ENCODE measurements at regions of chr15 and their contacts with region 1.

Region 1: DNA sequence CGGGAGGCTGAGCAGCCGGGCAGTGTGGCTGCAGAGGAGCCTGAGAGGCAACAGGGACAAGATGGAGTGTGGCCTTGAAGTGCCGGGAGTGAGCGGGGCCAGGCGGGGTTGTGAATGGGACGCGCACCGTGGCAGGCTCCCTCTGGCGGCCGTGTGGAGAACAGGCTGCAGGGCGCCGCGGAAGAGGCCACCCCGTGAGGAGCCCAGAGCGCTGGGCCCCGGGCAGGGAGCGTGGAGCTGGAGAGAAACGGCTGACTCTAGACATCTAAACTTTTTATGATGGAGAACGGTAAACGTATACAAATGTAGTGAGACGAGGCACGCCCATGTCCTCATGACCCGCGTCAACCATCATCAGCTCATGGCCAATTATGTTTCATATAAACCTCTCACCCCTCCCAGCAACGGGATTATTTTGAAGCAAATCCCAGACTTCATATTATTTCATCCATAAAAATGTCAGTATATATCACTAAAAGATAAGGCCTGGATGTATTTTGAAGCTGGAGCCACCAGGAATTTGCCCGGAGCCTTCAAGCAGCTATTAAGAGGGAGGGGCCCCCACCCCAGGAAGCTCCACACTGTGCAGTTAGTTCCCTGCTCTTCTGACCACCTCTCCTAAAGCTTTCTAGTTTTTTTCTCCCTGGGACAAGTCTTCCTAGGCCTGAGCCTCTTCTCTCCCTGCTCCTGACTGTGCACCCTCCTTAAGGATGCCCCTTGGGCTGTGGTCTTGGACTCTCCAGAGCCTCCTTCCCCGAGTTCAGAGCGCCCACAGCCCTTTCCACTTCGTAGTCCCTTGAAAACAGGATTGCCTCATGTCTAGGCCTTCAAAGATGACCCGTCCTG is 149.4 kb downstream of the SMAD6 start:
- DNase-seq: peak; percentile 89 to 91
- ATAC-seq: peak; percentile 92 to 98 (median 94)
- H3K4me3 ChIP-seq: peak overlapping the region; percentile 18
- H3K27ac ChIP-seq: no peak overlapping the region
- H3K4me1 ChIP-seq: peaks cover 8% of the 10 kb centered on the region
- H3K27me3 ChIP-seq: peaks cover 0 to 3% (median 0%) of the 10 kb centered on the region in 3 donors
- CTCF ChIP-seq: peak; percentile 96

Region 2: GRCh38 chr15:66603301-66604179 is 247.9 kb before region 1 on chr15:
- intact Hi-C with region 1: loop called in 1 of 2 experiments (anchors 5 kb)
- DNase-seq: peak; percentile 50 to 71
- ATAC-seq: peak in 3 of 4 donors; percentile 58 to 69 (median 69)
- H3K4me3 ChIP-seq: no peak overlapping the region
- H3K27ac ChIP-seq: no peak overlapping the region
- H3K4me1 ChIP-seq: no peaks in the 10 kb centered on the region
- H3K27me3 ChIP-seq: no peaks in the 10 kb centered on the region
- CTCF ChIP-seq: peak; percentile 53

Region 3: DNA sequence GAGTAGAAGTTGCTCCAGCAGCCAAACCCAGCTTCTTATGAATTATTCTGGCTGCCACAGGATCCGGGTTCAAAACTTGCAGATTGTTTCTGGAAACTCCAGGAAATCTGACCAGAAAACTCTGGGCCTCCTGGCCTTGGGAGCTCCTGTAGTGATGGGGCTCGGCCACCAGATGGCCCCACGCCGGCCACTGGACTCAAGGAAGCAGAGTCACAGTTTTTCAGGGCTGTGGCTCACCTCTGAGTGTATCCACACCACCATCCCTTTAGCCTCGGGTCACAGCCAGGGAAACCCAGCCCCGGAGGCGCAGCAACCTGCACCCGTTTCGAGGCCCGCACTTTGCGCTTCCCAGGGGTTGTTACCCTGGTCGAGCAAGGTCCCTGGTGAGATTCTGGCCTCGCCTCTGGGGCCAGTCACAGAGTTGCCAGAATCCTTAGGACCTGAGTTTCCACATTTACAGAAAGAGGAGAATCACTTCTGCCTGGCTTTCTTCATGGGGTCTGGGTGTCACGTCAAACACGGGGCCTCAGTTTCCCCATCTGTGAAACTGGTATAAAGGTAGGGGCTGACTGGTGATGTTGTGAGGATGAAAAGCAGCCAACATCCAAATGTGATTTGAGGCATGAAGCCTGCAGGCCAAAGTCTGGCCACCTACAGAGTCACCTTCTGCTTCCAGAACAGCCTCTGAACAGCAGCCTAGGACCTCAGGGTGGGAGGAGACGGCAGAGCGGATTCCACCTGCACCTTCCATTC is 232.1 kb before region 1 on chr15:
- intact Hi-C with region 1: loop called in 1 of 2 experiments (anchors 5 kb)
- DNase-seq: peak; percentile 76 to 85
- ATAC-seq: peak; percentile 82 to 91 (median 88)
- H3K4me3 ChIP-seq: no peak overlapping the region
- H3K27ac ChIP-seq: no peak overlapping the region
- H3K4me1 ChIP-seq: peaks cover 7% of the 10 kb centered on the region
- H3K27me3 ChIP-seq: peaks cover 0 to 20% (median 6%) of the 10 kb centered on the region in 3 donors
- CTCF ChIP-seq: peak; percentile 88

Region 4: DNA sequence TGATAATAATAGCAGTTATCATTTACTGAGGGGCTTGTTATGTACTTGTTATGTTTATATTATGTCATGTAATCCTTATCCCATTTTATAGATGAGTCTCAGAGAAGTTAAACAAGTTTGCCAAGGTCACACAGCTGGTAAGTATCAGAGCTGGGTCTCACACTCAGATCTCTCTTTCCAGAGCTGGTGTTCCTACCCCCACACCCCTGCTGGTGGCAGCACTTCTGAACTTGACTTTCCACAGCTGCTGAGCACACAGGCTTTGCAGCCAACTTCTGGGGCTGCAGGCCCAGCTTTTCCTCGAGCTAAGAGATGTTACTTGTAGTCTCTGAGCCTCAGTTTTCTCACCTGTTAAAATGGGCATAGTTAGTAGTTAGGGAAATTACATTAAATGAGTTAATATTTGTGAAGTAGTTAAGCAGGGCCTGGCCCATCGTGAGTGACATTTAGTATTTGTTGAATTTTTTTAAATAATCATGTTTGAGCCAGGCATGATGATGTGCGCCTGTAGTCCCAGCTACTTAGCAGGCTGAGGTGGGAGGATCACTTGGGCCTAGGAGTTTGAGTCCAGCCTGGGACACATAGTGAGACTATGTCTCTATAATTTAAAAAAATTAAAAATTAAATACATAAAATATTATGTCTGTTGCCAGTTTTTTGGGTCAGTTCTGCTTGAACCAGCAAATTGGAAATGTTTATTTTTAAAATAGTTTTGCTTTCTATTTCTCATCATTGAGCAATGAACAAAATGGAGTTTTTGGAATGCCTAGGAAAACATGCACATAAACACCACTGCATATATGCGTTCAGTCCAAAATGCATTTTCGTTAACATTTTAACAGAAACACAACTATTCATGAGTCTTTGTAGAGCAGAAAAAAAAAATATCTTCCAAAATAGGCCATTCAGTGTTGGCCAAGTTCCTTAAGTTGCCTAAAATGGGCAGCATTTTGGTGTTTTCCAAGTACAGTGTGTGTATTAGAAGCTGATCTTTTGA is 62.1 kb before region 1 on chr15:
- intact Hi-C with region 1: loop called in 1 of 2 experiments (anchors 1 kb)
- DNase-seq: peak in 1 of 2 donors; percentile 42
- ATAC-seq: peak in 2 of 4 donors; percentile 40 to 53
- H3K4me3 ChIP-seq: no peak overlapping the region
- H3K27ac ChIP-seq: no peak overlapping the region
- H3K4me1 ChIP-seq: no peaks in the 10 kb centered on the region
- H3K27me3 ChIP-seq: no peaks in the 10 kb centered on the region
- CTCF ChIP-seq: peak; percentile 25

Measured in psoas muscle (tissue), 8 donors.